ENCODE measurements at regions of chr2 and their contacts with region 1.

Region 1: DNA sequence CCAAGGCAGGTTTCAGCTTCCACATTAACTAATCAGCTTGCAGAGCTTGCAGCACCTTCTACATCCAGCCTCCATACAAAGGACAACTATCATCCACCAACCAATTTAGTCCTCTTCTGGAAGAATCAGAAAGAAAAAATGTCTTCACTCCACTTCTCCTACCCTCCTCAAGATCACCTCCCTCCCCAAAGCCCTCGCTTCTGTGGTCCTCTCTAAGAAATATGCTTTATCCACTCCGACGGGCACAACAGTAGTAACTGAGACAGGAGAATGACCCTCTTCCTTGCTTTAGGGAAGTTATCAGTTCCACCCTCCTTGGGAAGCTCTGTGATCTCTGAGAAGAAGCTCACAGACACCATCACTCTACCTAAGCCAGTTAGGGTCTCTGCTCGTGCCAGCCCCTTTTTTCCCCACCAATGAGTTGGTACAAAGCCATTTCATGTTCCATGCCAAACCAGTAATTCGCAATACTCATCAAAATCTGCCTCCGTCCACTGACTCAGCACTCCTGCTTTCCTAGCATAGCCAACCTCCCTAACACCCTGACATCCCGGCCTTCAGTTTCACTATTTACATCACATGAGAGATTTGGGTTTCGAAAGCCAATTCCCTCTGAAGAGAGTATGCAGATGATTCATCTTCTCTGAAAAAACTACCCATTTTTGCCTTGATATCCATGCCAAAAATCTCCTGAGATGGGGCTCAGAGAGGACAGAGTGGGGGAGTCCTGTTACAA is 114.1 kb upstream of the PKDCC start:
- DNase-seq: no peak
- H3K4me3 ChIP-seq: no peak overlapping the region
- H3K27ac ChIP-seq: no peak overlapping the region
- H3K4me1 ChIP-seq: peaks cover 13 to 50% of the 10 kb centered on the region in 2 experiments; a peak in 3 of 4 replicates
- H3K27me3 ChIP-seq: no peaks in the 10 kb centered on the region
- CTCF ChIP-seq: no peak
- EP300 ChIP-seq: no peak
- RAD21 ChIP-seq: no peak

Region 2: DNA sequence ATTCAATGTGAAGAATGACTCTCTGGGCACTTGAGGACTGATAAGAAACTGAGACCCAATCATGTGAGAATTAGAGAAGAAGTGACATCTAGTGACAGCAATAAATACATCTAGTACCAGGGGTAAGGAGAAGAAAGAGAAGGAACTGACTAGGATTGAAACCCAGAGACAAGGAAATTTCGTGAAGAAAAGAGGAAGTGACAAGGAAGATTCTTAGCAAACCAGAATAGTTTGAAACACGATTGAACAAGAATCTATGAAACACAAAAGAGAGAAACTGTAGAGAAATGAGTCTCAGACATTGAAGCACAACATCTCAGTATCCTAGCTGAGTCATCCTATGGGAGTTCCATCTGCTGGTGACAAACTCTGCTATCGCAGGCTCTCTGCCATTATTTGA is 457.8 kb before region 1 on chr2:
- CTCF ChIA-PET with region 1: no interaction called
- POLR2A ChIA-PET with region 1: no interaction called
- DNase-seq: no peak
- H3K4me3 ChIP-seq: no peak overlapping the region
- H3K27ac ChIP-seq: no peak overlapping the region
- H3K4me1 ChIP-seq: no peaks in the 10 kb centered on the region
- H3K27me3 ChIP-seq: no peaks in the 10 kb centered on the region
- CTCF ChIP-seq: no peak
- EP300 ChIP-seq: no peak
- RAD21 ChIP-seq: no peak

Region 3: DNA sequence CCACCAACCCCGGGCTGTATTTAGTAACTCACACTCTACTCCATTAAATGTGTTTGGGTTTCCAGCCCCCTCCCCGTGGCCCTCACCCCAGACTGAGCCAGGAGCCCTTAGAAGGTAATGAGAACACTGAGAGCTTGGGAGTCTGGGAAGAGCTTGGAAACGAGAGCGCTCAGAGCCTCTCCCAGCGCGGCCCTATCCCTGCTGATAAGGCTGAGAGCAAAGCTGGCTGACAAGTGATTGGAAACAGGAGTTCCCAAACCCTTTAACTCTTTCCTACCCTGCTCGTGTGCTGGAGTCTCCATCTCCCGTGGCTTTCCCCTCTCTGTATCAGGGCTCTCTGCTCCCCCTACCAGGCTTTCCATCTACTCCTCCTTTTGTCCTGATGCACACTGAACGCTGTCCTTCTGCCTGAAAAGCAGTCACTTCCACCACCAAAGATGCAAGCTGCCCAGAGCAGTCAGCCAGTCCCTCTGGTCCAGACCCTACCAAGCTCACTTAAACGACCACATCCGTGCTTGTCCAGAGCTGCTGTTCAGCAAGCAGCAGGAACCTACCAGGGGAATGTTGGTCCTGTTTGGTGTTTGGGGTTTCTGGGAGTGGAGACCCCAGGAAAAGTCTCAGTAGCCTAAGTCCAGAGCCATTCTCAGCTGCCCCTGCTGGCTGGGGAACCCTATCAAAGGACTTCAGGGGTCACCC is 14.1 kb after region 1 on chr2:
- CTCF ChIA-PET with region 1: interaction called, 23 read pairs
- POLR2A ChIA-PET with region 1: interaction called, 14 read pairs
- DNase-seq: peak; percentile 81
- H3K4me3 ChIP-seq: no peak overlapping the region; a peak in 1 of 4 replicates
- H3K27ac ChIP-seq: peak overlapping the region in 1 of 2 experiments; percentile 95; a peak in 2 of 4 replicates
- H3K4me1 ChIP-seq: peaks cover 0 to 52% of the 10 kb centered on the region in 2 experiments; a peak in 3 of 4 replicates
- H3K27me3 ChIP-seq: peaks cover 15% of the 10 kb centered on the region
- CTCF ChIP-seq: no peak
- EP300 ChIP-seq: peak in 1 of 2 experiments; percentile 89; a peak in 2 of 4 replicates
- RAD21 ChIP-seq: peak; percentile 45